ENCODE measurements at regions of chr1 and their contacts with region 1.

Region 1: DNA sequence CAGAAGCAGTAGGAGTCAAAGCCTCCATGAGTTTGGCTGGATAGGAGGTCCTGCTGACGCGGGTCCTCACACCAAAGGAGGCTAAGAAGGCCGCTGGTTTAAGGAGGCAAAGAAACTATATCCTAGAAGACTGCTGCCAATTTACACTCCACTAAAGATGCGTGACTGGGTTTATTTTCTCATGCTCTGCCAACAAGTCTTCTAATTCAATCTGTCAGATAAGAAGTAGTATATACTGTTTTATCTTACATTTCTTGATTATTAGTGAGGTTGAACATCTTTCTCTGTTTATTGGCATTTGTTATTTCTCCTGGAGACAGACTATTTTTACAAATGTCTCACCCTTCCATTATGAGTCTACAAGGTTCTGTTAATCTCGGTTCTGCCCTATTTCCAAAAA is 34.1 kb downstream of the ACBD6 start:
- DNase-seq: no peak
- ATAC-seq: no peak
- H3K4me3 Mint-ChIP-seq: no peak overlapping the region
- H3K27ac Mint-ChIP-seq: no peak overlapping the region
- H3K4me1 Mint-ChIP-seq: peaks cover 9% of the 10 kb centered on the region
- H3K27me3 Mint-ChIP-seq: no peaks in the 10 kb centered on the region
- CTCF ChIP-seq: no peak

Region 2: GRCh38 chr1:180365039-180365438 is 103.3 kb before region 1 on chr1:
- CTCF ChIA-PET with region 1: no interaction called
- POLR2A ChIA-PET with region 1: no interaction called
- intact Hi-C with region 1: loop called (anchors 10 kb)
- DNase-seq: no peak
- ATAC-seq: no peak
- H3K4me3 Mint-ChIP-seq: no peak overlapping the region
- H3K27ac Mint-ChIP-seq: no peak overlapping the region
- H3K4me1 Mint-ChIP-seq: peaks cover 7% of the 10 kb centered on the region
- H3K27me3 Mint-ChIP-seq: no peaks in the 10 kb centered on the region
- CTCF ChIP-seq: no peak

Measured in activated CD8-positive, alpha-beta T cell treated with anti-CD3 and anti-CD28 coated beads for 36 hours (primary cell).